PC-9 (cell line): ENCODE measurements at regions of chr17 and their contacts with region 1.

Region 1: GRCh38 chr17:43584666-43585102 is 38.5 kb upstream of the ETV4 start:
- DNase-seq: no peak
- H3K4me3 ChIP-seq: no peak overlapping the region
- H3K27ac ChIP-seq: no peak overlapping the region
- H3K4me1 ChIP-seq: peaks cover 18% of the 10 kb centered on the region
- H3K27me3 ChIP-seq: no peaks in the 10 kb centered on the region
- CTCF ChIP-seq: no peak

Region 2: DNA sequence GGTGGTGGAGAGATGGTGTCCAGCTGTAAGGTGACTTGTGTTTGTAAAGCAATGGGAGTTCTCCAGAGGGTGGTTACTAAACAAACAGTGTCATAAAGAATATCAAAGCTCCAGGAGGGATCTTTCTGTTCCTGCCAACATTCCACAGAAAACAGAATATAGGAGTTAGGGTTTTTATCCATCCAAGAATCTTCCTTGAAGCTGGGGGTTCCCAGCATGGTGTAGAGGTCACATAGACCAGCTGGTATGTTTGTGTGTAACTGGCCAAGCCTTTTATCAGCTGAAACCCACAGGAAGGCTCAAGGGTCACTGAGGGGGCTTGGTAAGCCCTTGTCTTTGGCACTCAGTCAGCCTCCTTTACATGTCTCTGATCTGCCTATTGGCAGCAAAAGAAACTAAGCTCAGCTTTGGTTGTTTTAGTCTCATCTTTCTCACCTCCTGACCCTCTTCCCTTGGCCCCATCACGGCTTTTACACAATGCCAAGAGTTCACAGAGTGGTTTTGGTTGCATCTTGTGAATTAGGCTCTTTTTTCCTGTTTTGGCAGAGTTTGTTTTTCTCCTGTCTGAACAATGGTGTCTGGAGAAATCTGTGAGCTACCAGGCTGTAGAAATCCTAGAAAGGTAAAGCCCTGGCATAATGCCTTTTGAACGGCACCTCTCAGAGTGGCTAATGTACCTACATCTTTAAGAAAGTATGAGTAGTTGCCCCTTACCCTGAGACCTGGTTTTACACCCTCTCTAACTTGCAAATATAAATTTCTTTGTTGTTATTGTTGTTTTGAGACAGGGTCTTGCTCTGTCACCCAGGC is 781.4 kb before region 1 on chr17:
- CTCF ChIA-PET with region 1: no interaction called
- POLR2A ChIA-PET with region 1: interaction called, 15 read pairs
- intact Hi-C with region 1: no loop called
- DNase-seq: no peak
- H3K4me3 ChIP-seq: no peak overlapping the region
- H3K27ac ChIP-seq: no peak overlapping the region
- H3K4me1 ChIP-seq: no peaks in the 10 kb centered on the region
- H3K27me3 ChIP-seq: no peaks in the 10 kb centered on the region
- CTCF ChIP-seq: no peak